ENCODE measurements at regions of chr7 and their contacts with region 1.

Region 1: DNA sequence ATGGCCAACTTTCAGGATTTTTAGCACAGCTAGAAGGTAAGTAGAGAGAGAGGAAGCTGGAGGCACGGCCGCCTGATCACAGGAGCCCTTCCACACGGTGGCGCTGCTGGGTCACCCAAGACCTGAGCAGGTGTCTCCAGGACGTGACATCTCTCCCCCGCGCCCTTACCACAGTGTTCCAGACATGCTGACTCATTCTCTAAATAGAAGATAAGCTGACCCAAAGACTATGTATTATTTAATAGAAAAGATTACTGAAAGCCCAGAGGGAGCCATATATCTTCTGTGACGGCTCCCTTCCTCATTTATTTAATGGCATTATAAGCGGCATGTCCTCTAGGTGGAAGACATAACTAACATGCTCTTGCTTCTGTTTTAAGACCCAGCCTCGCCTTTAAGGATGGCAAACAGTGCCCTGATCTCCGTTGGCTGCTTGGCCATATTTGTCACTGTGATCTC is 26.0 kb upstream of the MALSU1 start:
- DNase-seq: peak; percentile 93
- H3K4me3 Mint-ChIP-seq: peak overlapping the region; percentile 61
- H3K27ac Mint-ChIP-seq: peak overlapping the region; percentile 20
- H3K4me1 Mint-ChIP-seq: peaks cover 9% of the 10 kb centered on the region
- H3K27me3 Mint-ChIP-seq: peaks cover 3% of the 10 kb centered on the region

Region 2: GRCh38 chr7:23298885-23299769 is 26.0 kb after region 1 on chr7 and contains the start of gene MALSU1:
- CTCF ChIA-PET with region 1: interaction called, 10 read pairs
- POLR2A ChIA-PET with region 1: interaction called, 6 read pairs
- intact Hi-C with region 1: loop called (anchors 1 kb)
- DNase-seq: peak; percentile 98
- H3K4me3 Mint-ChIP-seq: peak within 1 kb of the TSS; percentile 96
- H3K27ac Mint-ChIP-seq: peak within 1 kb of the TSS; percentile 97
- H3K4me1 Mint-ChIP-seq: peaks cover 36% of the 10 kb centered on the region
- H3K27me3 Mint-ChIP-seq: peaks cover 3% of the 10 kb centered on the region
- total RNA-seq, gene MALSU1: 100 to 101 TPM

Region 3: GRCh38 chr7:23419845-23420244 is 146.7 kb after region 1 on chr7:
- CTCF ChIA-PET with region 1: interaction called, 11 read pairs
- POLR2A ChIA-PET with region 1: no interaction called
- intact Hi-C with region 1: no loop called
- DNase-seq: no peak
- H3K4me3 Mint-ChIP-seq: no peak overlapping the region
- H3K27ac Mint-ChIP-seq: no peak overlapping the region
- H3K4me1 Mint-ChIP-seq: peaks cover 5% of the 10 kb centered on the region
- H3K27me3 Mint-ChIP-seq: peaks cover 7% of the 10 kb centered on the region

Region 4: GRCh38 chr7:23474094-23474828 is 201.1 kb after region 1 on chr7:
- CTCF ChIA-PET with region 1: interaction called, 12 read pairs
- POLR2A ChIA-PET with region 1: no interaction called
- intact Hi-C with region 1: no loop called
- DNase-seq: peak; percentile 91
- H3K4me3 Mint-ChIP-seq: peak overlapping the region; percentile 63
- H3K27ac Mint-ChIP-seq: peak overlapping the region; percentile 42
- H3K4me1 Mint-ChIP-seq: peaks cover 27% of the 10 kb centered on the region
- H3K27me3 Mint-ChIP-seq: peaks cover 60% of the 10 kb centered on the region

Region 5: DNA sequence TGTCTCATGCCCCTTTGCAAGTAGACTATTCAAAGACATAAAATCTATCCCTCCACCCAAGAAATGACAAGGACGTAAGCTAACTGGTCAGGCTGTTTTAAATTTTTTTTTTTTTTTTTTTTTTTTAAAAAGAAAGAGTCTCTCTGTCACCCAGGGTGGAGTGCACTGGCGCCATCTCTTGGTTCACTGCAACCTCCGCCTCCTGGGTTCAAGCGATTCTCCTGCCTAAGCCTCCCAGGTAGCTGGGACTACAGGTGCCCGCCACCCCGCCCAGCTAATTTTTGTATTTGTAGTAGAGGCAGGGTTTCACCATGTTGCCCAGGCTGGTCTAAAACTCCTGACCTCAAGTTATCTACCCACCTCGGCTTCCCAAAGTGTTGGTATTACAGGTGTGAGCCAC is 247.4 kb after region 1 on chr7:
- CTCF ChIA-PET with region 1: interaction called, 16 read pairs
- POLR2A ChIA-PET with region 1: no interaction called
- intact Hi-C with region 1: no loop called
- DNase-seq: peak; percentile 38
- H3K4me3 Mint-ChIP-seq: no peak overlapping the region
- H3K27ac Mint-ChIP-seq: no peak overlapping the region
- H3K4me1 Mint-ChIP-seq: peaks cover 46% of the 10 kb centered on the region
- H3K27me3 Mint-ChIP-seq: no peaks in the 10 kb centered on the region

Region 6: GRCh38 chr7:23546897-23547572 is 273.9 kb after region 1 on chr7:
- CTCF ChIA-PET with region 1: interaction called, 22 read pairs
- POLR2A ChIA-PET with region 1: no interaction called
- intact Hi-C with region 1: loop called (anchors 1 kb)
- DNase-seq: peak; percentile 86
- H3K4me3 Mint-ChIP-seq: no peak overlapping the region
- H3K27ac Mint-ChIP-seq: no peak overlapping the region
- H3K4me1 Mint-ChIP-seq: peaks cover 2% of the 10 kb centered on the region
- H3K27me3 Mint-ChIP-seq: no peaks in the 10 kb centered on the region